ENCODE measurements at regions of chr15 and their contacts with region 1.

Region 1: DNA sequence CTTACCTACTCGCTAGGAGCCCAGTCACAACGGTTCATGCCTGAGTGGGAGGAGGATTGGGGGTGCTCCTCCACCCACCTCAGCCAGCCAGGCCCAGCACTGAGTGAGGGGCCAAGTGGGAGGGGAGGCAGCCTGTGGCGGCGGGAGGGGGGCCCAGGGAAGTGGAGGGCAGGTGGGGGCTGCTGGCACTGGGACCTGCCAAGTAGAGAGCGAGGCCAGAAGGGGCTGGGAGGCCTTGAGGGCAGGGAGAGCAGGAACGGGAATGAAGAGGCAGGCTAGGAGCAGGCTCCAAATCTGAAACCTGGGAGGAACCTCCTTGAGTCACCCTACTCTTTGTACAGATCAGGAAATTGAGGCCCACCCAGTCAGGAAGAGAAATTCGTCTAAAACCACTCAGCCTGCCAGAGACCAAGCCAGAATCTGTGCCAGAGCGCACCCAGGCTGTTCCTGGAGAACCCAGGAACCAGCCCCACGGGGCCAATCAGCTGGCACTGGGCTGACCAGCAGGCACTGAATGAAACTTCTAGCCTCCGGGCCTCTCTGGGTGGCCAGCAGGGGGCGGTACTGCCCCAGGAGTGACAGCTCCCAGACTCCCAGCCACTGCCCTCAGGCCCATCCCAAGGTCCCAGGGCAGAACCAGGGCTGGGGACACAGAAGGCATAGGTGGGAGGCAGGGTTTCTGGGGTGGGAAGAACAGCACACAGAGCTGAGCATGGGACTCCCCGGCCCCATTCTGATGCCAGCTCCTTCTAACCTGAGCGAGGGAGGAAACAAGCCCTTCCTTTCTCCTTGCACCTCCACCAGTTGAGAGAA is 14.8 kb upstream of the CYP11A1 start:
- DNase-seq: peak in 4 of 5 donors; percentile 63 to 72 (median 68)
- H3K4me3 ChIP-seq: no peak overlapping the region
- H3K4me3 Mint-ChIP-seq: no peak overlapping the region
- H3K27ac ChIP-seq: no peak overlapping the region
- H3K27ac Mint-ChIP-seq: no peak overlapping the region
- H3K4me1 ChIP-seq: peaks cover 33% of the 10 kb centered on the region
- H3K4me1 Mint-ChIP-seq: peaks cover 9 to 26% (median 18%) of the 10 kb centered on the region in 4 donors
- H3K27me3 ChIP-seq: no peaks in the 10 kb centered on the region
- H3K27me3 Mint-ChIP-seq: no peaks in the 10 kb centered on the region

Region 2: DNA sequence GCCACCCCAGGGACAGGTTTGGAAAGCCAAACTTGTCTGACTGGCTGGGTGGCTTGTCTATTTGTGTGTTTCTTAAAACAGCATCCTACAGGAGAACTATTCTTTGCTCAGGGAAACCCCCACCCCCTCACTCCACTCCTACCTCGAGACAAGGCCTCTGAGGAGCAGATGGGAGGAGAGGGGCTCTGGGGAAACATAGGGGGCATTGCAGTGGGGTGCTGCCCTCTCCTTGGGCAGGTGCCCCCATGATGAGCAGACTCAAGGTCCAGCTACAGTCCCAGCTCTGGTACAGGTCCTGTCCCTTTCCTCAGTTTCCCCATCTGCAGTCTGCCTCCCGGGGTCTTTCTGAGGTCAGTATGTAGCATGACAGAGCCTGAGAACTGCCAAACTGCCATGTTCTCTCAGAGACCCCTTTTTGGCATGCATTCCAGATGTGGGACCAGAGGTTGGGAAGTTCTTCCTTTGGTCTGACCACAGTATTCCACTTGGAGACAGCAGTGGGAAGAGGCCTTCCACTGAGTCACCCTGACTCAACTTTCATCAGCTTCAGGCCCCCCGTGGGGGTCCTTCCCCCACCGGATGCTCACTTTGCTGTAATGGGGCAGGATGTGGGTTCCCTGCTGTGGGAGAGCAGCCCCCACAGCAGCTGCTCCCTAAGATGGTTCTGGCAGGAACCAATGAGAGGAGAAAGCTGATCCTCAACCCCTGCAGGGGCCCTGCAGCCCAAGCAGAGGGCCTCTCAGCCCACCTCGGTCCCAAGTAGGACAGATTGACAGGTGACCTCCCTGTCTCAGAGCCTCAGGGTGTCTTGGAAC is 17.5 kb after region 1 on chr15:
- CTCF ChIA-PET with region 1: interaction called, 8 read pairs
- POLR2A ChIA-PET with region 1: interaction called, 10 read pairs
- intact Hi-C with region 1: no loop called
- DNase-seq: peak in 1 of 5 donors; percentile 5
- H3K4me3 ChIP-seq: no peak overlapping the region
- H3K4me3 Mint-ChIP-seq: no peak overlapping the region
- H3K27ac ChIP-seq: no peak overlapping the region
- H3K27ac Mint-ChIP-seq: no peak overlapping the region
- H3K4me1 ChIP-seq: peaks cover 47% of the 10 kb centered on the region
- H3K4me1 Mint-ChIP-seq: peaks cover 23 to 41% (median 37%) of the 10 kb centered on the region in 4 donors
- H3K27me3 ChIP-seq: no peaks in the 10 kb centered on the region
- H3K27me3 Mint-ChIP-seq: no peaks in the 10 kb centered on the region

Region 3: GRCh38 chr15:74433592-74434262 is 51.5 kb after region 1 on chr15 and contains the start of gene SEMA7A:
- CTCF ChIA-PET with region 1: interaction called, 550 read pairs
- POLR2A ChIA-PET with region 1: interaction called, 5 read pairs
- intact Hi-C with region 1: loop called (anchors 1 kb)
- DNase-seq: peak; percentile 50 to 65 (median 55)
- H3K4me3 ChIP-seq: peak within 1 kb of the TSS; percentile 52 to 62
- H3K4me3 Mint-ChIP-seq: peak within 1 kb of the TSS; percentile 66 to 91 (median 81)
- H3K27ac ChIP-seq: no peak within 1 kb of the TSS
- H3K27ac Mint-ChIP-seq: peak within 1 kb of the TSS in 4 of 7 donors; percentile 19 to 70 (median 53)
- H3K4me1 ChIP-seq: peaks cover 17% of the 10 kb centered on the region
- H3K4me1 Mint-ChIP-seq: peaks cover 6 to 35% (median 17%) of the 10 kb centered on the region in 4 donors
- H3K27me3 ChIP-seq: no peaks in the 10 kb centered on the region
- H3K27me3 Mint-ChIP-seq: peaks cover 2 to 3% of the 10 kb centered on the region in 2 donors
- total RNA-seq, gene SEMA7A: 1.2 to 1.9 TPM

Region 4: GRCh38 chr15:74438721-74439316 is 56.6 kb after region 1 on chr15:
- CTCF ChIA-PET with region 1: interaction called, 550 read pairs
- POLR2A ChIA-PET with region 1: interaction called, 5 read pairs
- intact Hi-C with region 1: loop called (anchors 1 kb)
- DNase-seq: peak; percentile 61 to 71 (median 66)
- H3K4me3 ChIP-seq: no peak overlapping the region
- H3K4me3 Mint-ChIP-seq: peak overlapping the region in 1 of 8 donors; percentile 44
- H3K27ac ChIP-seq: no peak overlapping the region
- H3K27ac Mint-ChIP-seq: peak overlapping the region in 1 of 7 donors; percentile 9
- H3K4me1 ChIP-seq: peaks cover 11% of the 10 kb centered on the region
- H3K4me1 Mint-ChIP-seq: peaks cover 4 to 17% (median 11%) of the 10 kb centered on the region in 4 donors
- H3K27me3 ChIP-seq: no peaks in the 10 kb centered on the region
- H3K27me3 Mint-ChIP-seq: no peaks in the 10 kb centered on the region

Region 5: DNA sequence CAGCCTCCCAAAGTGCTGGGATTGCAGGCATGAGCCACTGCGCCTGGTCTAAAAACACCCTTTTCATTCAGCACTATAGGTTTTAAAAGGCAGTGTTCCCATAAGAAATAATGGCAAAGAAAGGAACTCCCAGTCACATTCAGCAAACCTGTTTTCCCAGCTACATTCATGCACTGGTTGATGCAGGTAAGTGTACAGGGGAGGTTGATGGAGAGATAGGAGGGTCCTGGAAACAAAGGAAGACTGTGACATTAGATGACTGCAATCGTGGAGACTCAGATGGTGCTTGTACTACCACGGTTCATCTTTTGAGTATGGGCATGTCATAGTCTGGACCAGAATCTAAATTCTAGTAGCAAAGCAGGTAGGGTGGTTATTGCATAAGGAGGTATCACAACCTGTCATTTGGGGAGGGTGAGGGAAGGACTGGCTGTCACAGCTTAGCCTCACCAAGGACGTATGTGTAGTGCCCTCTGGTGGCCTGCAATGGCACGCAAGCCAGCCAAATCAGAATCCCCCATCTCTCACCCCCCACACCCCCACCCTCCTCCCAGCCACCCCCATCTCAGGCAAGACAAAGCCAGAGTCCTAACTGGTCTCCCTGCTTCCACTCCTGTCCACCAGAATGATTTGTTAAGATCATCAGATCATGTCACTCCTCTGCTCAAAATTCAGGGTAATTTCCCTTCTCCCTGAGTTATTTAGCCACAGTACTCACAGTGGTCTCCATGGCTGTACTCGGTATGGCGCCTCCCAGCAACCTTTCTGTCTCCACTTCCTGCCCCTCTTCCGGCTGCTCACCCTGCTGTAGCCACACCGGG is 107.5 kb after region 1 on chr15:
- CTCF ChIA-PET with region 1: interaction called, 17 read pairs
- POLR2A ChIA-PET with region 1: no interaction called
- intact Hi-C with region 1: loop called (anchors 1 kb)
- DNase-seq: peak; percentile 49 to 69 (median 54)
- H3K4me3 ChIP-seq: no peak overlapping the region
- H3K4me3 Mint-ChIP-seq: peak overlapping the region in 1 of 8 donors; percentile 20
- H3K27ac ChIP-seq: no peak overlapping the region
- H3K27ac Mint-ChIP-seq: peak overlapping the region in 1 of 7 donors; percentile 39
- H3K4me1 ChIP-seq: peaks cover 10% of the 10 kb centered on the region
- H3K4me1 Mint-ChIP-seq: peaks cover 9 to 12% (median 10%) of the 10 kb centered on the region in 4 donors
- H3K27me3 ChIP-seq: no peaks in the 10 kb centered on the region
- H3K27me3 Mint-ChIP-seq: no peaks in the 10 kb centered on the region